Posterior vena cava (tissue), 2 donors: ENCODE measurements at regions of chr14 and their contacts with region 1.

Region 1: GRCh38 chr14:82987502-82988124 is 1454.0 kb upstream of the SEL1L start:
- DNase-seq: no peak

Region 2: GRCh38 chr14:81220830-81221578 is 1766.6 kb before region 1 on chr14 and contains the start of gene GTF2A1:
- intact Hi-C with region 1: loop called in 1 of 2 experiments (anchors 10 kb)
- DNase-seq: peak; percentile 99
- total RNA-seq, gene GTF2A1: 28.3 to 30.6 TPM

Region 3: DNA sequence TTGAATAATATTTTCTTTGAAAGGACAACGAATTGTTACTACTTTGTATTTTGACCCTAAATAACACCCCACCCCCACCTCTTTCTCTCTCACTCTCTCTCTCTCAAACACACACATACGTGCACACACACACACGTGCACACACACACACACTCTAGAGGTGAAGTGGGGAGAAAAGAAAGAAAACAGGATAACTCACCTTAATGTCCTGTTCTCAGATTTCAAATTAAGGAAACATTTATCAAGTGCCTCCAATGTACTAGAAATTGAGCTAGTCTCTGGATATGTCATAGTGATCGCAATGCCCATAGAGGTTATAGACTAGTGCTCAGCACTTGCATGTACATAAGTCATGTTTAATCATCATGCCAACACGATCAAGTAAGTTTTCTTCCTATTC is 29.7 kb after region 1 on chr14:
- intact Hi-C with region 1: no loop called
- DNase-seq: no peak